Left cardiac atrium (tissue), 4 donors: ENCODE measurements at regions of chr6 and their contacts with region 1.

Region 1: GRCh38 chr6:89364586-89364985 is 12.1 kb upstream of the UBE2J1 start:
- DNase-seq: no peak
- ATAC-seq: no peak

Region 2: GRCh38 chr6:88919032-88919431 is 445.6 kb before region 1 on chr6:
- intact Hi-C with region 1: no loop called
- DNase-seq: no peak
- ATAC-seq: no peak

Region 3: GRCh38 chr6:89311853-89312531 is 52.6 kb before region 1 on chr6:
- intact Hi-C with region 1: loop called in 1 of 2 experiments (anchors 2 kb)
- DNase-seq: peak; percentile 66
- ATAC-seq: peak; percentile 66 to 81

Region 4: DNA sequence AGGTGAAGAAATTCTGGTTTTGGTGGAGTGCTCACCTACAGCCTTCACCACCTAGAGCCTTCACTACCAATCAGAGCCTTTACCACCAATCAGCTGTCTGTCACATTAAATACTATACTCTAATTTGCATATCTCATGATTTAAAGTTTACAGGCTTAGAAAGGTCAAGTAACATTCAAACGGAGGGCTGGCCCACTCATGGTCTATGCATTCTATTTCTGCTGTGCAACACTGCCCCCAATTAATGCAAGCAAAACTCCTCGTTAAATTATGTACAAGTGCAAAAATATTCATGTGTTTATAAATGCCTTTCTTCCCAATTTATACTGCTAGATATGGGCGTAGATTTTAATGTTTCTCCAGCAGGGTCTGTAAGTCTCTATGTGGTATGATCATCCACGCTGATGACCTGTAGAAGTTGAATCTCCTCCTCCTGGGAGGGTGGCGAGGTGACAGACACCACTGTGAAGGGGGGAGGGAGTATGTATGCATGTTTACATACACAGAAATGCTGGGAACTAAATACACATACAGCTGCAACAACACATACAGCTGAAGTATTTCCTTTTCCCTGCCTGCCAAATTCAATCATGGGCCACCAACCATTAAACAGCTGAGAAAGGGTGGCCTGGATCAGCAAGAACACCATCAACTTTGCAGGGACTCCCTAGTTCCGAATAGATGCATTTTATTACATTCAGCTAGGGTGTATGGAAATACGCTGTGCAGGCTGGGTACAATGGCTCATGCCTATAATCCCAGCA is 34.4 kb after region 1 on chr6:
- intact Hi-C with region 1: no loop called
- DNase-seq: no peak
- ATAC-seq: no peak